B cell (primary cell): ENCODE measurements at regions of chr13 and their contacts with region 1.

Region 1: GRCh38 chr13:23579072-23579895 is 9.1 kb downstream of the TNFRSF19 start:
- DNase-seq: peak; percentile 93
- ATAC-seq: peak; percentile 96
- H3K4me3 ChIP-seq: peak overlapping the region; percentile 1 to 77 (median 70)
- H3K4me3 Mint-ChIP-seq: peak overlapping the region; percentile 83
- H3K27ac ChIP-seq: peak overlapping the region; percentile 66 to 83
- H3K27ac Mint-ChIP-seq: peak overlapping the region; percentile 59
- H3K4me1 ChIP-seq: peaks cover 12 to 16% of the 10 kb centered on the region in 2 donors
- H3K4me1 Mint-ChIP-seq: peaks cover 17% of the 10 kb centered on the region
- H3K27me3 ChIP-seq: peaks cover 3 to 30% (median 21%) of the 10 kb centered on the region in 4 experiments
- H3K27me3 Mint-ChIP-seq: peaks cover 56% of the 10 kb centered on the region
- CTCF ChIP-seq: no peak

Region 2: DNA sequence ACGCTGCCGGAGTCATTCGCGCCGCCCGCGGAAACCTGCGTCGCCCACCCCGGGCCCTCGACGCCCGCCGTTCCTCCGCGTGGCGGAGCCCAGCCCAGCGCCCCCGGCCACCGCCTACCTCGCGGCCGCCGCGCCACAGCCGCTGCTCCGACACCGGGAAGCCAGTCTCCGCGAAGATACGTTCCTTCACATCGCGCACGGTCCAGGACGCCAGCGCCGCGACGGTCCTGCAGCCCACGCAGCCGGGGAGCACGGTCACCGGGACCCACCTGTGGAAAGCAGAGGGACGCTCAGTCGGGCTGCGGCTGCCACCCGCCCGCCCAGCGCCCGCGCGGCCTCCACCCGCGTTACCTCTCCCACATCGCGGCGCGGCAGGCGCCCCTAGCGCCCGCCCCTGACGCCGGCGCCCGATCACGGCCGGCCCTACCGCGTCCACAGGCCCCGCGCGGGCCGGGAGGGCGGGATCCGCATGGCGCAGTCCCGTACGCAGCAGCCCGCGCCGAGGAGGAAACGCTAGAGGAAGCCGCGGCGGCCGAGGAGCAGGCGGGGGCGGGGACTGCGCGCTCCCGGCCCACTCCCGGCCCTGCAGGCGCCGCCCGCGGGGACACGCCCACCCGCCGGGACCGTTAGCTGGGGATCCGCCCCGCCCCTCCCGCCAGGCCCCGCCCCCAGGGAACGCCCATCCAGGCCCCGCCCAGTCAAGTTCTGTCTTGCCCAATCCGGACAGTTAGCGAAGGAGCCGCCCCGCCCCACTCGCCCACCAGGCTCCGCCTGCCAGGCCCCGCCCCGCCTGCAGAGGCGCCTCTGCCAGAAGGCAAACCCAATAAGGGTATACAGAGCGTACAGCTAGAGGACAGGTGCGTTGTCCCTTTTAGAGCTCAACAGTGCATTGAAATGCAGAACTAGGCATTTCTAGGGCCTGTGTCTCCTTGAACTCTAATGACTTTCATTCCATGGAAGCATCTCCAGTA is 204.0 kb before region 1 on chr13:
- CTCF ChIA-PET with region 1: no interaction called
- POLR2A ChIA-PET with region 1: no interaction called
- intact Hi-C with region 1: loop called (anchors 1 kb)
- DNase-seq: peak; percentile 96
- ATAC-seq: peak; percentile 85
- H3K4me3 ChIP-seq: peak overlapping the region in 4 of 5 experiments; percentile 46 to 69 (median 67)
- H3K4me3 Mint-ChIP-seq: peak overlapping the region; percentile 79
- H3K27ac ChIP-seq: peak overlapping the region; percentile 49 to 51
- H3K27ac Mint-ChIP-seq: peak overlapping the region; percentile 86
- H3K4me1 ChIP-seq: peaks cover 56 to 59% of the 10 kb centered on the region in 2 donors
- H3K4me1 Mint-ChIP-seq: peaks cover 64% of the 10 kb centered on the region
- H3K27me3 ChIP-seq: no peaks in the 10 kb centered on the region
- H3K27me3 Mint-ChIP-seq: no peaks in the 10 kb centered on the region
- CTCF ChIP-seq: peak; percentile 59

Region 3: DNA sequence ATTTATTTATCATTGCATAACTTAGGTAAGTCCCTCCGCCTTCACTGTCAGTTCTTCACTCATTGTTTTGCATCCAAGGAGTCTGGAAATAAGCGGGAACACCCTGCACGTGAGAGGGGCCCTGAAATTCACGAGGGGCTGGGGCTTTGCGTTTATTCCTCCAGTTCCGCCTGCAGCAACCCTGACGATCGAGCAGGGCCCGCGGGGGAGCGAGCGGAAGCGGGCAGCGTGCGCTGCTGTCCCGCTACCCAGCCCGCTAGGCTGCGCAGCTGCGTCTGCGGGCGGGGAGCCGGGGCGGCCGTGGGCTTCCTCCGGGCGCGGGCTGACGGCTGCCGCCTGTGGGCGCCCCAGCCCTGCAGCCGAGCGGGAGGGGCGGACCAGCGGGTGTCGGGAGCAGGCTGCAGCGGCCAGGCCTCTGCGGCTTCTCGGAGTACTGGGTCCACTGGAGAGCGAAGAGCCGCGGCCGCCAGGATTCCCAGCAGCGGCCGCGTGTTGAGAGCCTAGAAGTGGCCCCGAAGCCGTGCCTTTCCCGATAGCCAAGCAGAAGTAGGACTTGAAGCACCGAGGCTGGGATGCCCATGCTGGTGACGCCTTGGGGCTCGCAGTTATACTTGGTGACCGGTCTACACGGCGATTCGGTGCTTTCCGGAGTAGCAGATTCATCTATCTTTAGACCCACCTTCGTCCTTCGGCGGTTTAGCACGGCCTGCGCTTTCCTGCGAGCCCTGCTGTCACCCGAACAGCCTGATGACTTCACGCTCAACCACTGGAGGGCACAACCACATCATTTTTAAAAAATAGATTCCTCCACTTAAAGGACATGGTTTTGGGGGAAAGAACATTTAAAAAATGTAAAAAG is 112.9 kb before region 1 on chr13:
- CTCF ChIA-PET with region 1: no interaction called
- POLR2A ChIA-PET with region 1: no interaction called
- intact Hi-C with region 1: loop called (anchors 5 kb)
- DNase-seq: peak; percentile 77
- ATAC-seq: peak; percentile 89
- H3K4me3 ChIP-seq: peak overlapping the region; percentile 42 to 70 (median 53)
- H3K4me3 Mint-ChIP-seq: peak overlapping the region; percentile 87
- H3K27ac ChIP-seq: no peak overlapping the region
- H3K27ac Mint-ChIP-seq: peak overlapping the region; percentile 46
- H3K4me1 ChIP-seq: peaks cover 4 to 12% of the 10 kb centered on the region in 2 donors
- H3K4me1 Mint-ChIP-seq: peaks cover 8% of the 10 kb centered on the region
- H3K27me3 ChIP-seq: peaks cover 0 to 27% (median 9%) of the 10 kb centered on the region in 4 experiments
- H3K27me3 Mint-ChIP-seq: peaks cover 58% of the 10 kb centered on the region
- CTCF ChIP-seq: peak; percentile 68

Region 4: DNA sequence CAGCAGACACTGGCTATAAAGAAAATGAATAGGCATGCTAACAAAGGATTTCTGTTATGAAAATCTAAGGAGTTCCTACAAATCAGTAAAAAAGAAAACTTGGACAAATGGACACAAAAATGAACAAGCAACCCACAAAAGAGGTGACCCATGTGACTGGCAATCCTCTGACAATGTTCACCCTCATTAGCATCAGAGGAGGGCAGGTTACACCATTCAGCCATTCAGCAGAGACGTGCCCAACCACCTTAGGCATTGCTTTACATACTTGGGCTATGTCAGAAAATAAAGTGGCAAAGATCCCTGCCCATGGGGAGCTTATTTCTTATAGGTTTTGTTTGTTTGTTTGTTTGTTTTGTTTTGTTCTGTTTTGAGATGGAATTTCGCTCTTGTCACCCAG is 36.9 kb after region 1 on chr13:
- CTCF ChIA-PET with region 1: no interaction called
- POLR2A ChIA-PET with region 1: no interaction called
- intact Hi-C with region 1: no loop called
- DNase-seq: no peak
- ATAC-seq: no peak
- H3K4me3 ChIP-seq: no peak overlapping the region
- H3K4me3 Mint-ChIP-seq: no peak overlapping the region
- H3K27ac ChIP-seq: no peak overlapping the region
- H3K27ac Mint-ChIP-seq: no peak overlapping the region
- H3K4me1 ChIP-seq: no peaks in the 10 kb centered on the region
- H3K4me1 Mint-ChIP-seq: no peaks in the 10 kb centered on the region
- H3K27me3 ChIP-seq: peaks cover 0 to 5% (median 0%) of the 10 kb centered on the region in 4 experiments
- H3K27me3 Mint-ChIP-seq: peaks cover 15% of the 10 kb centered on the region
- CTCF ChIP-seq: no peak

Region 5: DNA sequence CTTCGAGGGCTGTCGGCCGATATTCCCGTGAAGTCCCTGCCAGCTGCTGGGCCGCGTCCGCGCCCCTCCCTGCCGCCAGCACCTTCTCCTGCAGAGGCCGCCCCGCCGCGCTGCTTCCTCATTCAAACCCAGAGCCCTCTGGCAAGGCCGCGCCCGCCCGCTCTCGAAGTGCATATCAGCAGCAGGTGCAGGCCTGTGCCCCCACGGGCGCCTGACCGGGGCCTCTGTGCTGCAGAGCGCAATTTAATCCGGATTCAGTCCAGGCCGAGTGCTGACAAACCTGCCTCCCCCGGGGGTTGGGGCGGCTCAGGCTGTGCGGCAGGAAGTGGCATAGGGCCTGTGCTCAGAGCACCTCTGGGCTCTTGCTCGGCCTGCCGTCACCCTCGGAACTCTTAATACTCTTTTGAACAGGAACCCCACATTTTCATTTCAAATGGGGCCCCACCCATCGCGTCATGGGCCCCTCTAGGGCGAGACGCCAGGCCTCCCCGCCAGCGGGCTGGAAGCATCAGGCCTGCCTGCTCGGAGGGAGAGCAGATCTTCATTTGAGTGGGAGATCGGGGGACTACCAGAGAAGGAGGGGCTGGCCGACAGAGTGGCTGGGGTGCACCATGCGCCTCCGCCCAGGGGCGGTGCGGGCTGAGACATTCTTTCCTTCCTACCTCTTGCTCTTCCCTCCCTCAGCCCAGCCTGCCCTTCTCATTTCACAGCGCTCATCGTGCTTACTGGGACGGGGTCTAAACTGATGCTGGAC is 116.6 kb after region 1 on chr13:
- CTCF ChIA-PET with region 1: no interaction called
- POLR2A ChIA-PET with region 1: no interaction called
- intact Hi-C with region 1: loop called (anchors 2 kb)
- DNase-seq: peak; percentile 77
- ATAC-seq: peak; percentile 96
- H3K4me3 ChIP-seq: peak overlapping the region in 4 of 5 experiments; percentile 24 to 53 (median 45)
- H3K4me3 Mint-ChIP-seq: peak overlapping the region; percentile 89
- H3K27ac ChIP-seq: peak overlapping the region; percentile 78 to 83
- H3K27ac Mint-ChIP-seq: peak overlapping the region; percentile 98
- H3K4me1 ChIP-seq: peaks cover 9 to 21% of the 10 kb centered on the region in 2 donors
- H3K4me1 Mint-ChIP-seq: peaks cover 19% of the 10 kb centered on the region
- H3K27me3 ChIP-seq: no peaks in the 10 kb centered on the region
- H3K27me3 Mint-ChIP-seq: no peaks in the 10 kb centered on the region
- CTCF ChIP-seq: no peak

Region 6: DNA sequence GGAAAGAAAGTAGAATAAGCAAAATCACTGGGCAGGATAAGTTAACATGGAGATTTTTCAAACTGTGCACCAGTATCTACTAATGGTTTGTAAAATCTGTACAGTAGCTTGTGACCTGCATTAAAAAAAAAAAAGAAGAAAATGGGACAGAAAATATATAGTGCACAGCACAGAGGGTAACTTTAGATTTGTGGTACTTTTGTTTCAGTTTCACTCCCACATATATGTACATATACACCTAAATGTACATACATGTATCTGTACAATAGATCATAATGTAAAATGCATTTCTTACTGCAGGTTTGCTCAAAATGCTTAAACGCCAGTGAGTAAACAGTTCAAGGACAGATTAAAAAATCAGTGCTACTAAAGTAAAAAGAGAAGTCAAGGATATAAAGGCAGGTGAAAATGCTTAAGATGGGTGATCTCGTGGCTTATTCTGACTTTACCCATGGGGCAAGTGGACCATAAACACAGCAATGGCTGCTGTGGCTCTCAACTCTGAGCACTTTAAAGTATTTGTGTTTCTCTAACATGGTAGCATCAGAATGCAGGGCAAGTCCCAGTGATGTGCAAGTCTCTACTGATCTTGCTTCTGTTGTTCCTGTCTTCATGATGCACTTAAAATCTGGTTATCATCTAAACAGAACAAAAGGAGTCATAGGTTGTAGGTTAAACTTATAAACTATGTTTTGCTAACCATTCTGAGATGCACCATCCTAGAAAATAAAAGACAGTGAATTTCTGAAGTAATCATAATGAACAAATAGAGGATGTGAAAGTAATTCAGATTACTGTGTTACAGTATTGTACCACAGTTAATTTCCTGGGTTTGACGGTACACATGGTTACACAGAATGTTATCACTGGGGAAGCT is 197.7 kb after region 1 on chr13:
- CTCF ChIA-PET with region 1: no interaction called
- POLR2A ChIA-PET with region 1: no interaction called
- intact Hi-C with region 1: no loop called
- DNase-seq: peak; percentile 64
- ATAC-seq: peak; percentile 97
- H3K4me3 ChIP-seq: peak overlapping the region in 1 of 5 experiments; percentile 17
- H3K4me3 Mint-ChIP-seq: peak overlapping the region; percentile 13
- H3K27ac ChIP-seq: no peak overlapping the region
- H3K27ac Mint-ChIP-seq: peak overlapping the region; percentile 3
- H3K4me1 ChIP-seq: peaks cover 14 to 36% of the 10 kb centered on the region in 2 donors
- H3K4me1 Mint-ChIP-seq: peaks cover 33% of the 10 kb centered on the region
- H3K27me3 ChIP-seq: peaks cover 0 to 37% (median 33%) of the 10 kb centered on the region in 4 experiments
- H3K27me3 Mint-ChIP-seq: peaks cover 57% of the 10 kb centered on the region
- CTCF ChIP-seq: no peak

Region 7: DNA sequence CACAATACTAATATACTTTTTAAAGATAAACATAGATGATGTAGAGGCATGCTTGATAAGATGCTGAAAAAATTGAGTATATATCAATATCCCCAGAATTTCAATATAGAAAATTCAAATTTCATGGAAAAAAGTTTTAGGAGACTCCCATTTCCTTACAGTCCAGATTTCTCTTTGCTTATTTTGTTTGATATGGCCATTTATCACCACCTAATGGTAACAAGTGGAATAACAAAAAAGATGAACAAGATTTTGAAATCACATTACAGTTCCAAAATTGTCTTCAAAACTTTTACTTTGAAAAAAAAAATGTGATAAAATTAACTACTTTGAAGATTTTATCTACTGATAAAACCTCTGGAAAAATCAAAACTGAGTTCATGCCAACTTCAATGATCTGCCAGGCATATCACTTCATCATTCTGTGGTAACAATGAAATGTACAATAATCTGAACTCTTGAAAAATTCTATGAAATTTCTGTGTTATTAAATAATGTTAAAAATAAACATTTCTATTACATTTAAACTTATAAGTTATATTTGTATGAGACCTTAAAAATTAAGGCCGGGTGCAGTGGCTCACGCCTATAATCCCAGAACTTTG is 292.4 kb after region 1 on chr13:
- CTCF ChIA-PET with region 1: interaction called, 3 read pairs
- POLR2A ChIA-PET with region 1: no interaction called
- intact Hi-C with region 1: loop called (anchors 1 kb)
- DNase-seq: peak; percentile 44
- ATAC-seq: no peak
- H3K4me3 ChIP-seq: no peak overlapping the region
- H3K4me3 Mint-ChIP-seq: no peak overlapping the region
- H3K27ac ChIP-seq: no peak overlapping the region
- H3K27ac Mint-ChIP-seq: no peak overlapping the region
- H3K4me1 ChIP-seq: peaks cover 10 to 12% of the 10 kb centered on the region in 2 donors
- H3K4me1 Mint-ChIP-seq: peaks cover 13% of the 10 kb centered on the region
- H3K27me3 ChIP-seq: no peaks in the 10 kb centered on the region
- H3K27me3 Mint-ChIP-seq: no peaks in the 10 kb centered on the region
- CTCF ChIP-seq: peak; percentile 90

Region 8: DNA sequence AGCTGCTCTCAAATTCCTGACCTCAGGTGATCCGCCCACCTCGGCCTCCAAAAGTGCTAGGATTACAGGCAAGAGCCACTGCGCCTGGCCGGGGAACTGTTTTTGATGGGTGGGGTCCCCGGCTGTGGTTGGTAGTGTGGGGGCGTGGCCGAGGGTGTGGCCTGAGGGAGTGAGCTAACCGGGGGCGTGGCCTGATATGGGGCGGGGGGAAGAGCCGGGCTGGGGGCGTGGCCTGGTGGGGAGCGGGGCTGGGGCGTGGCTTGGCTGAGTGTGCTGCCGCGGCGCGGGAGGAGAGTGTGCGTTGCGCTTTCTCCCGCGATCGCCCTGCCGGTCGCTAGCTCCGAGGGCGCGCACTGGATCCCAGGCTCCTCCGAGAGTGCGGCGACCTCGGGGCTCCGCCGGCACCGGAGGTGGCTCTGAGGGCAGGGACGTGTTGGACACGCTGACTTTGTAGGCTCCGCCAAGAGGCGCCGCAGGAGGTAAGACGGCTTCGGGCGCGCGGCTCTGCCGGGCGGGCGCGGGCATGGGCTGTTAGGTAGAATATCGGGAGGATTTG is 581.2 kb after region 1 on chr13 and contains the start of gene SPATA13:
- CTCF ChIA-PET with region 1: no interaction called
- POLR2A ChIA-PET with region 1: no interaction called
- intact Hi-C with region 1: loop called (anchors 2 kb)
- DNase-seq: peak; percentile 92
- ATAC-seq: peak; percentile 95
- H3K4me3 ChIP-seq: peak within 1 kb of the TSS; percentile 6 to 80 (median 74)
- H3K4me3 Mint-ChIP-seq: peak within 1 kb of the TSS; percentile 87
- H3K27ac ChIP-seq: no peak within 1 kb of the TSS
- H3K27ac Mint-ChIP-seq: peak within 1 kb of the TSS; percentile 37
- H3K4me1 ChIP-seq: peaks cover 9 to 20% of the 10 kb centered on the region in 2 donors
- H3K4me1 Mint-ChIP-seq: peaks cover 18% of the 10 kb centered on the region
- H3K27me3 ChIP-seq: peaks cover 0 to 32% (median 11%) of the 10 kb centered on the region in 4 experiments
- H3K27me3 Mint-ChIP-seq: peaks cover 22% of the 10 kb centered on the region
- CTCF ChIP-seq: no peak
- total RNA-seq, gene SPATA13: 8.3 and 8.8 TPM in 2 replicates

Region 9: DNA sequence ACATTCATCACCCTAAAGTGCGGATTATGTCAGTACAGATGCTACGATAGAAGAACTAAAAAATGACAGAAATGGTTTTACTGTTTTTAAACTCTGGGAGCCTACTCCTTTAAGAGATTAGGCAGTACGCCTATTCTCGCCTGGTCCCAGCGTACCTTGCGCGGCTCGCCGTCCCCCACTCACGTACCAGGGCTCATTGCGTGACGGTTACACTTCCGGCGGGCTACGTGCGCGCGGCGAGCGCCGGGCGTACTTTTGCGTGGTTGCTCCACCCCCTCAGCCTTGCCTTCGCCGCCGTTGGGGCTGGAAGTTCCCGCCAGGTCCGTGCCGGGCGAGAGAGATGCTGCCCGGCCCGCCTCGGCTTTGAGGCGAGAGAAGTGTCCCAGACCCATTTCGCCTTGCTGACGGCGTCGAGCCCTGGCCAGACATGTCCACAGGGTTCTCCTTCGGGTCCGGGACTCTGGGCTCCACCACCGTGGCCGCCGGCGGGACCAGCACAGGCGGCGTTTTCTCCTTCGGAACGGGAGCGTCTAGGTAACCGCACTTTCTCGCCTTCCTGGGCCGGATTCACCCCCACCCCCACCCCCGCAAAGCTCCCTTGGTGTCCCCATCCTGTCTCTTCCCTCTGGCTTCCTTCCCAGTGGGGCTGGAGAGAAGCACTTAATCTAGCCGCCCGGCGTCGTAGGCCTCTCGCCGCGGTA is 1722.2 kb after region 1 on chr13 and contains the start of gene NUP58:
- CTCF ChIA-PET with region 1: no interaction called
- POLR2A ChIA-PET with region 1: no interaction called
- intact Hi-C with region 1: loop called (anchors 5 kb)
- DNase-seq: peak; percentile 97
- ATAC-seq: peak; percentile 99
- H3K4me3 ChIP-seq: peak within 1 kb of the TSS; percentile 69 to 94 (median 86)
- H3K4me3 Mint-ChIP-seq: peak within 1 kb of the TSS; percentile 87
- H3K27ac ChIP-seq: peak within 1 kb of the TSS; percentile 90 to 97
- H3K27ac Mint-ChIP-seq: peak within 1 kb of the TSS; percentile 95
- H3K4me1 ChIP-seq: peaks cover 13 to 17% of the 10 kb centered on the region in 2 donors
- H3K4me1 Mint-ChIP-seq: peaks cover 33% of the 10 kb centered on the region
- H3K27me3 ChIP-seq: peaks cover 0 to 20% (median 15%) of the 10 kb centered on the region in 4 experiments
- H3K27me3 Mint-ChIP-seq: peaks cover 17% of the 10 kb centered on the region
- CTCF ChIP-seq: no peak
- total RNA-seq, gene NUP58: 41.0 and 41.7 TPM in 2 replicates